ENCODE measurements at regions of chr17 and their contacts with region 1.

Region 1: DNA sequence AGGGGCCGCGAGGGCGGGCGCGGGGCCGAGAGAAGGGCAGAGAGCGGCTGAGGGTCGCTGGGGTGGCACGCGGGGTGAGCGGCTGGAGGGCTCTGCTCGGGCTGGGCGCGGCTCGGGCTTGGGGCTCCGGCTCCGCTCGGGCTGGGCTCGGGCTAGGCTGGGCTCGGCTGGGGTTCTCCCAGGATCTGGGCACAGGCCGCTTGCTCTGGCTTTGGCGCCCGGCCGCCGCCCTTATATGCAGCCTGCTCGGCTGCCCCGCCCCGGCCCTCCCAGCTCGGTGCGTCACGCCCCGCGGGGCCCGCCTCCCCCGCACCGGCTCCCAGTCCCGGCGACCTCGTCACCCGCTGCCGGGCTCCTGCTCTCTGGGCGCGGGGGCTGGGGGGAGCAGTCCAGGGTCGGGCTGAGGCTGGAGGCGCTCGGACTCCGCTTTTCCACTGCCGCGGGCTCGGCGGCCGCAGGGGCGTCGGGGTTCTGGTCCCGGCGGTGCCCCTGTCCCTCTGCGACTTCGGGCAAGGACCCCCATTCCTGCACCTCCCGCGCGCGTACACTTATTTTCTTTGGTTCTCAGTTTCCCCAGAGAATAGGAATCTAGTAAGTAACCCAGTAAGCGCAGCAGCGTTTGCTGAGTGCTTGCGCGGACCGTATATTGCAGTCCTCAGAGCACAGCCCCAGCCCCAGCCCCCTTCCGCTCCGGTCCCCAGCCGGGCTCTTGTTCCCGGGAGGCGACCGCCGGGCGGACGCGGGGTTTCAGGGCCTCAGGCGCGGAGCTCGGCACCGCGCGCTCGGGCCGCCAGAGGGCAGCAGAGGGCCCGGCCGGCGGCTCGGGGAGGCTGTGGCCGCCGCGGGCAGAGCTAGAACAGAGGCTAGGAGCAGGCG is at the start of gene RASD1:
- DNase-seq: peak; percentile 96
- total RNA-seq, gene RASD1: 4.4 TPM

Region 2: DNA sequence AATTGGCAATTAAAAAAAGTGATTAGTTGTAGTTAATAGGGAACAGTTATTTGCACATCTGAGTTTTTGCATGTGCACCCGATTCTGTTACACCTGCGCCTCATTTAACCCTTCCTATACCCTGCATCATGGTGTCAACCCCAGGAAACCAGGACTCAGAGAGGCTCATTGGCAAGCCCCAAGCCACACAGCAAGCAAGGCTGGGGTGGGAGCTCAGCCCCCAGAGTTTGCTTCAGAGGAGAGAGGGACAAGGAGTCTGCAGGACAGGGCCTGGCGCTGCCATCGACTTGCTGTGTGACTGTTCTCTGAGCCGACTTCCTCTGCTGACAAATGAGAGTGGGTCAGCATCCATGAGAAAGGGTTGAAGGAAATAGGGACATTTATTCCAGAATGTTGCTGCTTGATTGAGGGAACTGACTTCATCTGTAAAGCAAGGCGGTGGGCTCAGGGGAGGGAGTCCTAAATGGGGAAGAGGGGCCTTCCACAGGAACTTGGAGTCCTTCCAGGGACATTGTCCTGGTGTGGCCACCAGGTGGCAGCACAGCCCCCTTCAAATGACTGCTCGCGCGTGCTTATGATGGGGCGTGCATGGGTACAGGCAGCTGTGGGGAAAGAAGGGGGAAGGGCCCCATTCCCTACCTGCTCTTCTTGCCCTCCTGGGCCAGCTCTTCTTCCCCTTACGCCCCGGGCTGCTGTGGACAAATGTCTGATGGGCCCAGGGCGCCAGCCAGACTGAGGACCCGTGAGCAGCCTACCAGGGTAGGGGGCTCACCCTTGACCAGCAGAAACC is 141.7 kb before region 1 on chr17:
- intact Hi-C with region 1: loop called (anchors 5 kb)
- DNase-seq: peak; percentile 85

Region 3: DNA sequence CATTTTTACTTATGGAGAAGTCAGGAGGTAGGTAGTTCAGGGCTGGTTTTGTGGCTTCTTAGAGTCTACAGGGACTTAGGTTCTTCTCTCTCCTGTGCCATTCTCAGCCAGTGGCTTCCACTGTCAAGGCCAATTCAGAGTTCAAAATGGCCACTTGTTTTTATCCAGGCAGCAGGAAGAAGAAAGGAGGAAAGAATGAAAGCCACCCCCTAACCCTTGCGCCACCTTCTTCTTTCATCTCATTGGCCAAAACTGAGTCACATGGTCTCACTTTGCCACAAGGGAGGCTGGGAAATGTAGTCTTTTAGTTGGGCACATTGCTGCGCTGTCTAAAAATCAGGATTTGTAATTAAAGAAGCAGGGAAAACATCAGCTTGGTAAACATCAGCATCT is 80.4 kb before region 1 on chr17:
- intact Hi-C with region 1: loop called (anchors 5 kb)
- DNase-seq: peak; percentile 31

Region 4: GRCh38 chr17:17455173-17455572 is 41.3 kb before region 1 on chr17:
- intact Hi-C with region 1: no loop called
- DNase-seq: no peak

Region 5: GRCh38 chr17:17551361-17551760 is 54.9 kb after region 1 on chr17:
- intact Hi-C with region 1: loop called (anchors 5 kb)
- DNase-seq: peak; percentile 87

Region 6: GRCh38 chr17:17568749-17569195 is 72.3 kb after region 1 on chr17:
- intact Hi-C with region 1: loop called (anchors 1 kb)
- DNase-seq: peak; percentile 89

Region 7: GRCh38 chr17:17613708-17614114 is 117.3 kb after region 1 on chr17:
- intact Hi-C with region 1: loop called (anchors 5 kb)
- DNase-seq: no peak

Region 8: DNA sequence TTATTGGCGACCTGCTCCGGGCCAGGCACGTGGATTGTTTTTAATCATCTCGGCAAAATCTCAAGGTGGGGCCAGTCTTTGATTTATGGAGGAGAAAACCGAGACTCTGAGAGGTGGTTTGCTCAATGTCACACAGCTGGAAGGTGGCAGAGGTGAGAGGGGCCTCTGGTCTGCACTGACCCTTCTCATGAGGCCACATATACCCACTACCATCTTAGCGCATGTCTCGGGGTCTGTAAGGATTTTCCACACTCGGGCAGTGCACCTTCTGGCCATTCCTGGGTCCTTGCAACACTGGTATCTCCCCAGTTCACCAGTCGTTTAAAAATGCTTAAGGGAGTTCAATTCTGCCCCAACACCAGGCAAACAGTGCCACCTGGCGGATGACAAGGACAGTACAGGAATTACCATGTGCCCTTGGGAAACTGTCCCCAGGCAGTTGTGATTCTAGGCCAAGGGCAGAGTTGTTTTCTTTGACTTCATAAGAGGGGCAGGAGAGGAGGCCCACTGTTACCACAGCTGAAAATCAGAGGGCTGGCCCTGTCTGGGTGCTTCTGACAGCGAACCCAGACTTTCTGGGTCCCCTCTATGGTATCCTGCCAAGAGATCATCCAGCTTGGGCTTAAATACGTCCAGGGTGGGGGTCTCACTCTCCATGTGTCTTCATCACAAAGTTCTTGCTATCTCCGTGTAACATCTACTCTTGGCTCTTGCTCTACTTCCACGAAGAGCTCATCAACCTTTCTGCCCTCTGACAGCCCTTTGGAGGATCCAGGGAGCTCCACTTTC is 145.4 kb after region 1 on chr17:
- intact Hi-C with region 1: loop called (anchors 5 kb)
- DNase-seq: peak; percentile 90

Measured in cardiac septum (tissue), 1 donor.